GM10248 (cell line): ENCODE measurements at regions of chr12 and their contacts with region 1.

Region 1: DNA sequence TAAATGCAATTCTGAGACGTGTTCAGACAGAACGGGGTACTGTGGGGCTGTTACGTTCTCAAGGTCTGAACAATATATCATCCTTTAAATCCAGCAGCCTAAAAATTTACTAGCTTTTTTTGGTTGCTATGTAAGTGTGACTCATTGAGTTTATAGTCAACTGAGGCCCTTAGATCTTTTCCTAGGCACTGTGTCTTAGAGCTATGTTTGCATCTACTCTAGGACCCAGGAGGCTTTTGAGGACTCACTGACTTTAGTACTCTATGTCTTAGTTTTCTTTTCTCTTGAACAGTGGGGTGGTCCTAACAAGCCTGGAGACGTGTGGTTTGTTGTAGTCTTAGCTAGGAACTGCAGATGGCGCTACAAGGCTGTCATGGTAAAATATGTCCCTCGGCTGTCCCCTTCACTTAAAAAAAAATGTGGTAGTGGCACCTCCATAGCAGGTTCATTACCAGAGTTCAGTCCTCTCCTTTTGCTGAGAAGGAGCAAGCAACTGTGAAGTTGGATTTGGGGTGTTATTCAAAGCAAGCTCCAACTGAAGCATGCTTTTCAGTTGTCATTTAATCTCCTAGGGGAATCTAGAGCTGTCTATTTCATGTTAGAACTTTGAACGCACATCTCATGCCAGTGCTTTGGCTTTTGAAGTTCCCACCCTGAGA is 8.7 kb upstream of the SPATS2 start:
- DNase-seq: peak; percentile 70
- CTCF ChIP-seq: peak; percentile 69

Region 2: GRCh38 chr12:49018261-49019119 is 340.1 kb before region 1 on chr12 and contains the start of gene PRKAG1:
- CTCF ChIA-PET with region 1: no interaction called
- POLR2A ChIA-PET with region 1: no interaction called
- DNase-seq: peak; percentile 99
- CTCF ChIP-seq: peak; percentile 53

Region 3: GRCh38 chr12:49296034-49296835 is 62.4 kb before region 1 on chr12:
- CTCF ChIA-PET with region 1: interaction called, 239 read pairs
- POLR2A ChIA-PET with region 1: interaction called, 3 read pairs
- DNase-seq: peak; percentile 87
- CTCF ChIP-seq: peak; percentile 80

Region 4: DNA sequence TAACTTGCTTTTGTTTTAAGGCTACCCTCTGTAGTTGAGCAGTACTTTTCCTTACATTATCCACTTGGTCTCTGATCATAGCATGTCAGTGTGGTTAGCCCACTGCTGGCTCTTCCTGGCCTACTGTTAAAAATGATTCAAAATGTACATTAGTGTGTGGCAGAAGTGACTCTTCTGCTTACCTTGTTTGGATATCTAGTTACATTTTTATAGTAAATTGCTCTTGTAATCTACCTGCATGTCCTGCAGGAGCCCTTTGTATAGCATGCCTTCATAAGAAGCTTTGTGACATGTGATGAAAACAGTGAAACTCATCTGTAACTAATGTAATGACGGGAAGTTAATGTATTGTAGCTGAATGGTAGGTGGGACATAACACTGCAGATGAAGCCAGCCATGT is 16.8 kb after region 1 on chr12:
- CTCF ChIA-PET with region 1: interaction called, 62 read pairs
- POLR2A ChIA-PET with region 1: no interaction called
- DNase-seq: no peak
- CTCF ChIP-seq: no peak

Region 5: GRCh38 chr12:49470986-49471385 is 112.4 kb after region 1 on chr12:
- CTCF ChIA-PET with region 1: interaction called, 11 read pairs
- POLR2A ChIA-PET with region 1: no interaction called
- DNase-seq: no peak
- CTCF ChIP-seq: no peak

Region 6: DNA sequence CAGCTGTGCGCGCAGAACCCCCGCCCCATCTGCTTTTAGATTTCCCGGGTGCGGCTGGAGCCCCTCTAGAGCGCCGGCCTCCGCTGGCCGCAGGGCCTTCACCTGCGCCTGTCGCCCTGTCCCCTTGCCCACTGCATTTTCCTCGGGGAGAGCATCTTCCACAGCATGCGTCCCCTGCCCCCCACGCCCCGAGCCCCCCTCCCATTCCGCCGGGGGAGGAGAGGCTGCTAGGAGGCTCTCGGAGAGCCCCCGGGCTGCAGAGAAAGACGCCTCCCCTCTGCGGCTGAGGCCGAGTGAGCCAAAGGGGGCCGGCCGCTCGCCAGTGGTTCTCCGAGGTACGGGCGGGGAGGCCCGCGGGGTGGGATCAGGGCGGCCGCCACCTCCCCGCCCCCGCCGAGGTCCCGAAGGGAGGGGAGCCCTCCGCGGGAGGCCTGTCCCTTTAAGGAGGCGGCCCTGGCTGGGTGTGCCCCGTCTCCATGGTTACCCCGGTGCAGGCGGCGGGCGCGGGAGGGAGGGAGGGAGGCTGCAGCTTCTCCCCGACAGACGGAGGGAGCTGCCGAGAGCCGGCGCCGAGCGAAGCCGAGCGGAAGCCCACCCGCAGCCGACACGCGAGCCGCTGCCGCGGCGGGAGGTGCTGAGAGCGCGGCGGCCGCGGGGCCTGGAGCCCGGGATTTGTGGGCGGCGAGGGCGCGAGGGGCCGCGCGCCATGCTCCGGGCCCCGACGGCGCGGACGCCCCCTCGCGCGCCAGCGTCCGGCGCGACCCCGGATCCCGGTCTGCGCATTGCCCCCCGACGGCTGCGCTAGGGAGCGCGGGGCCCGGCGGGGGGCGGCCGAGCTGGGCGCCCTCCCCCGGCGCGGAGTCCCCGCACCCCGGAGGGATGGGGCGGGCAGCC is 180.1 kb after region 1 on chr12 and contains the start of gene KCNH3:
- CTCF ChIA-PET with region 1: interaction called, 19 read pairs
- POLR2A ChIA-PET with region 1: no interaction called
- DNase-seq: peak; percentile 94
- CTCF ChIP-seq: no peak

Region 7: DNA sequence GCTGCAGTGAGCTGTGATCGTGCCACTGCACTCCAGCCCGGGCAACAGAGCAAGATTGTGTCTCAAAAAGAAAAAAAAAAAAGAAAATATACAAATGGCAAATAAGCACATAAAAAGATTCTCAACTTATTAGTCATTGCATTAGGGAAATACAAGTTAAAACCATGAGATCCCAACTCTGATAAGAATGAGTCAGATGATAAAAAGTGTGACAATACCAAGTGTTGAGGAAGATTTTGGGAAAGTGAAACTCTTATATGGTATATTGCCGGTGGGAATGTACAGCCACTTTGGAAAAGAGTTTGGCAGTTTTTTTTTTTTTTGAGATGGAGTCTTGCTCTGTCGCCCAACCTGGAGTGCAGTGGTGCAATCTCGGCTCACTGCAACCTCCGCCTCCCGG is 257.1 kb after region 1 on chr12:
- CTCF ChIA-PET with region 1: interaction called, 13 read pairs
- POLR2A ChIA-PET with region 1: no interaction called
- DNase-seq: no peak
- CTCF ChIP-seq: no peak